Motor neuron (in vitro differentiated cells): ENCODE measurements at regions of chr16 and their contacts with region 1.

Region 1: DNA sequence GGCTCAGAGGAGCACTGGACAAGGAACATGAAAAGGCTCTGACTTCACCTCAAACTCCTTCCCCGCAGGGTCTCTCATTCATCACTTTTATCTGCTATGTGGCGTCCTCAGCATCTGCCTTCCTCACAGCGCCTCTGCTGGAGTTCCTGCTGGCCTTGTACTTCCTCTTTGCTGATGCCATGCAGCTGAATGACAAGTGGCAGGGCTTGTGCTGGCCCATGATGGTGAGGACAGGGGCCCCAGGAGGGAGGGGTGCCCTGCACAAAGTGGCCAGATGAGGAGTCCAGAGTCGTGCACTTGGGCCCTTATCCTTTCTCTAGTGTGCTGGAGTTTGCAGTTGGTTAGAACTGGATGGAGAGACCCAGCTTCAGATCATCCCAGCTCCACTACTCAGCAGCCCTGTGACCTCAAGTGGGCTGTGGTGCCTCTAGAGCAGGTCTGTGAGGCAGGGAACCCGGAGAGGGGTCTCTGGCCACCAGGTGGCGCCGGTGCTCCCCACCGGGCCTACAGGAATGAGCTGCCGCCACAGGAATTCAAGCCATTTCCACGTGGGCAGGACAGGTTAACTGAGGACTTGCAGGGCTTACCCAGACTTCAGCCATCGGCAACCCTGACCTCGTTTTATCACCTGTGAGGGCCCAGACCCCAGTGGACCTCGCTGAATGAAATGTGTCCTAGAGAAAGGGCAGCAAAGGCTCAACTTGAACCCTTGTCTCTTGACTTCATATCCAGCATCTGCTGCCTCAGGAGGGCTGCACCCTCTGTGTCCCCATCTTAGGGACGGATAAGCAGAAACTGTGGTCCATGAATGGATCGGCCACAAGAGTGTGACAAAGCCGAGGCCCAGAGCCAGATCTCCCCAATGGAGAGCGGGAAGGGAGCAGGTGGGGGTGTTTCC is 4.0 kb downstream of the CMTM3 start:
- ATAC-seq: peak; percentile 40 to 55 (median 48)
- H3K4me3 ChIP-seq: no peak overlapping the region
- H3K27ac ChIP-seq: no peak overlapping the region
- H3K4me1 ChIP-seq: peaks cover 0 to 8% of the 10 kb centered on the region in 2 donors

Region 2: DNA sequence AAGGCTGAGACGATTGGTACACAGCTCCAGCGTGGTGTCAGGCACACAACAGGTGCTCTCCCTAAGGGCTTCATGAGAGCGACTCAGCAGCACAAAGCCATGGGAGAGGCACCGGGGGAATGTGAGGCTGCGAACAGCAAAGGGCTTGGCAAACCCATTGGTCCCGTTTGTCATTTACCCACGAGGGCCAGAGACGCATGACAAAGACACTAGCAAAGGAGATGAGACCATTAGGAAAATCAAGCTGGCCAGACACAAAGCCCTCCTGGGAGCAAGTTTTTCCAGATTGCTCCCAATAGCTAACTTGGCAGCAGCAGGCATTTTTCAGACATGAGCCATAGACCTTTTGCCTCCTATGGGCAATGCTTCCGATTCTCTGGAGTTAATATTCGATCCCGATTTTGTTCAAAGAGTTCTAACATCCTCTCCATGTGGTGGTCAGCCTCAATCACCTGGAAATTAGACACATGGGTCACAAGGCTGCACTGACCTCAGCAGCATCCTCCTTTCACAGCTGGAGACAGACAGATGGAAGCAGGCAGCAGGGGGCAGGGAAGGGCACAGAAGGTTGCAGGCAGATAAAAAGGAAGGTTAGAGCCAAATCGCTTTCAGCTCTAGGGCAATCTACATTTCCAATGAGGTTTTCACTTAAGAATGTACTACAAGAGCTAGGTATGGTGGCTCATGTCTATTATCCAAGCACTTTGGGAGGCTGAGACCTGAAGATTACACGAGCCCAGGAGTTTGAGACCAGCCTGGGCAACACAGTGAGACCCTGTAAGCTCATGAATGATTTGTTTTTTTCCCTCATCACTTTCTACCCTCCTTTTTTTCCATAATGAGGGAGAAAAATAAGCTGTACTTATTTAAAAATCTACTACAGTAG is 96.6 kb before region 1 on chr16:
- in situ Hi-C with region 1: no loop called
- ATAC-seq: peak in 4 of 8 experiments; percentile 21 to 71 (median 68)
- H3K4me3 ChIP-seq: no peak overlapping the region
- H3K27ac ChIP-seq: no peak overlapping the region
- H3K4me1 ChIP-seq: peaks cover 4 to 6% of the 10 kb centered on the region in 2 donors

Region 3: GRCh38 chr16:66774981-66775380 is 166.5 kb after region 1 on chr16:
- in situ Hi-C with region 1: no loop called
- ATAC-seq: no peak
- H3K4me3 ChIP-seq: no peak overlapping the region
- H3K27ac ChIP-seq: no peak overlapping the region
- H3K4me1 ChIP-seq: no peaks in the 10 kb centered on the region

Region 4: GRCh38 chr16:66872943-66873684 is 264.6 kb after region 1 on chr16:
- in situ Hi-C with region 1: loop called in 1 of 9 experiments (anchors 25 kb)
- ATAC-seq: peak; percentile 98 to 99 (median 98)
- H3K4me3 ChIP-seq: peak overlapping the region; percentile 8 to 25 (median 17)
- H3K27ac ChIP-seq: no peak overlapping the region
- H3K4me1 ChIP-seq: peaks cover 0 to 4% of the 10 kb centered on the region in 2 donors